ENCODE measurements at regions of chr2 and their contacts with region 1.

Region 1: DNA sequence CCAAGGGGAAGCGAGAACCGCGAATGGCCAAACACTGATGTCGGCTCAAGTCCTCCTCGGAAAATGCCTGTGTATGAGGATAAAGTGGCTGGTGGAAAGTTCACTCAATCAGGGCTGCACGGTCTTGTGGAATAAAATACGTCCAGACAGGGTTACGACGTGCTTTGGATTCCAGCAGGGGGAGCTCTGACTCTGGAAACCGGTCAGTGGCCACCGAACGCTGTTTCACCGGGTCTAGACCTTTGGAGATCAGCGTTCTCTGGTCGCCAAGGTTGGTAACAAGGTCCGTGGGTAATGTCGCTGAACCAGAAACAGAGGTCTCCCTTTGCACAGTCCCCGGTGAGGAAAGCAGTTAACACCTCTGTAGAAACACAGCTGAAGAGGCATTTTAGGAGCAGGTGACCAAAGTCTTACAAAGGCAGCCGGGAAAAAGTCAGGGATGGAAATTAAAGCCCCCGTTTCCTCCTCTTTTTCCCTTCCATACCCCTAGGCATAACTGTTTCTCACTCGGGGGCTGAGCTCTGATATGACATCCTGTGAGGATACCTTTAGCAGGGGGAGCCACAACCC is 47.8 kb downstream of the CDCA7 start:
- DNase-seq: peak; percentile 40 to 74 (median 67)
- ATAC-seq: peak; percentile 87
- H3K4me3 ChIP-seq: no peak overlapping the region
- H3K4me3 Mint-ChIP-seq: peak overlapping the region in 1 of 10 donors; percentile 62
- H3K27ac ChIP-seq: no peak overlapping the region
- H3K27ac Mint-ChIP-seq: no peak overlapping the region
- H3K4me1 ChIP-seq: peaks cover 0 to 3% of the 10 kb centered on the region in 2 donors
- H3K4me1 Mint-ChIP-seq: peaks cover 0 to 12% (median 4%) of the 10 kb centered on the region in 7 donors
- H3K27me3 ChIP-seq: peaks cover 3 to 7% of the 10 kb centered on the region in 2 donors
- H3K27me3 Mint-ChIP-seq: peaks cover 55 to 73% (median 62%) of the 10 kb centered on the region in 5 donors

Region 2: DNA sequence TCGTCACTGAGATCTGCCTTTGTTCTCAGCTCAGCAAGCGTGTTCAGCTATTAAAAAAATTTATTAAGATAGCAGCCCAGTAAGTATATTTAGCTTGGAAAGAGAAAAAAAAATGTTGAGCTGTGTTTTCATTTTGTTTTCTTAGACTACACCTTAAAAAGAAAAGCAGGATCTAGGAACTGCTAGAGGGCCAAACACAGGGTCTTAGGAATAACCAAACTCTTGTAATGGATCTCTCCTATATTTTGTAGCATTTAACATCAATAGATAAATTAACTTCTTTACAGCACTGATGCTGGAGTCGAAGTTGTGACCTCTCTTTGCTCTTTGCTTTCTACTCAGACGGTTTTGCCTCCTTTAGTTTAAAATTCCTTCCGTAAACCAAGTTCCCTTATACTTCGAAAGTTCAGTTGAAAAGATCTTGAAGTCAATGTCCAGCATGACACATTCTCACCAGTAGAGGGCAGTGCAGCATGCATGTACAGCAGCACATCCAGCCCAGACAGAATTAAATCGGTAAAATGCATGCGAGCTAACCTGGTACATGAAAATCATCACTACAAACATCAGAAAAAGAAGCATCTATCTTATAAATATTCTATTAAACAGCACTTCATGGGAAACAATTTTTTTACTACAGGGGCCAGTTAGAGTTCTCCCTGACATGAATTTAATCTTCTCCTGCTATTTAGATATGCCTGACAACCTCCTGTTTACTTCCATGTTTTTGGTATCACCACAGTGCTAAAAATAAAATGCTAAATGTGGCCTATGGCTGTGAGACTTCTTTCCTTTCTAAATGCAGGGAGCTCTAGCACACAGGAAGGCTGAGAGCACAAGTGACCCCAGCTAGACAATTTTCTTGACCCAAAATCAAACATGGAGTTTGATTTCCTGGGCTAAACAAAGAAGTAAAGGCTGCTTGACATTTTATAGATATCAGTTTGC is 375.0 kb before region 1 on chr2:
- CTCF ChIA-PET with region 1: no interaction called
- POLR2A ChIA-PET with region 1: no interaction called
- intact Hi-C with region 1: loop called (anchors 1 to 5 kb)
- DNase-seq: peak; percentile 20 to 75 (median 63)
- ATAC-seq: peak; percentile 91
- H3K4me3 ChIP-seq: no peak overlapping the region
- H3K4me3 Mint-ChIP-seq: no peak overlapping the region
- H3K27ac ChIP-seq: no peak overlapping the region
- H3K27ac Mint-ChIP-seq: no peak overlapping the region
- H3K4me1 ChIP-seq: no peaks in the 10 kb centered on the region
- H3K4me1 Mint-ChIP-seq: peaks cover 0 to 7% (median 3%) of the 10 kb centered on the region in 7 donors
- H3K27me3 ChIP-seq: no peaks in the 10 kb centered on the region
- H3K27me3 Mint-ChIP-seq: peaks cover 6 to 15% (median 9%) of the 10 kb centered on the region in 5 donors

Region 3: GRCh38 chr2:173903601-173904394 is 501.3 kb after region 1 on chr2:
- CTCF ChIA-PET with region 1: no interaction called
- POLR2A ChIA-PET with region 1: no interaction called
- intact Hi-C with region 1: loop called in 1 of 2 experiments (anchors 10 kb)
- DNase-seq: no peak
- ATAC-seq: no peak
- H3K4me3 ChIP-seq: no peak overlapping the region
- H3K4me3 Mint-ChIP-seq: no peak overlapping the region
- H3K27ac ChIP-seq: no peak overlapping the region
- H3K27ac Mint-ChIP-seq: peak overlapping the region in 1 of 9 donors; percentile 70
- H3K4me1 ChIP-seq: no peaks in the 10 kb centered on the region
- H3K4me1 Mint-ChIP-seq: peaks cover 0 to 11% (median 3%) of the 10 kb centered on the region in 7 donors
- H3K27me3 ChIP-seq: no peaks in the 10 kb centered on the region
- H3K27me3 Mint-ChIP-seq: no peaks in the 10 kb centered on the region

Region 4: DNA sequence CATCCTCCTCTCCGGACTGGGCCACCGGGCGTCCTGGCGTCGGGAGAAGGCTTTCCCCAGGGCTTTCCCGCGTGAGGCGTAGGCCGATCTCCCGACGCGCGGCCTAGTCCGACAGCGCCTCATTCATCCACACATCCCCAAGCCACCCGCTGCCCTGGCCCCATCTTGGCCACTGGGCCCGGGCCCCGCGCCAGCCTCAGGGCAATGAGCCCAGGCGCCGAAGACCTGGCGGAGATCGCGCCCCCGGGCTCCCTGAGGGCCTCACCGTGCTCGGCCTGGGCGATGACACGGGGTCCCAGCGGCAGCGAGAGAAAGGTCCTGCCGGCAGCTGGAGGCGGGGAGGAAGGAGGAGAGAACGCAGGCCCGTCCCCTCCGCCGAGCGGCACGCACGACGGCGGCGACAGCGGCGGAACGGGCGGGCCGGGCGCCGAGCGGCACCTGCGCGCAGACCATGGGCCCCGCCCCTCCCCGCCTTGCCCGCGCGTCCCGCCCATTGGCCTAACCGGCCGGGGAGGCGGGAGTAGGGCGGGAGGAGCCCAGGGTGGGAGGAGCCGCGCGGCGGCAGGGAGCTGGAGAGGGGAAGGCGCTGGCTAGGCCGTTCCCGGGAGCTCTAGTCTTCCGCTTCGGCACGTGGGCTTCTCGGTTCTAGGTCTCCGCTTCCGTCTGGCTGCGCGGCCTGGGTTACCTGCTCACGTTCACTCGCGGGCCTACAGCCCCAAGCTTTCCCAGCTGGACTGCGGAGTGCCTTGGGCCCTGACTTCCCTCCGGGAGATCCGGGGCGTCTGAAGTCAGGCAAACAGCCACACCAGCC is 845.9 kb after region 1 on chr2 and contains the start of gene OLA1:
- CTCF ChIA-PET with region 1: no interaction called
- POLR2A ChIA-PET with region 1: no interaction called
- intact Hi-C with region 1: loop called in 1 of 2 experiments (anchors 5 kb)
- DNase-seq: peak; percentile 91 to 99 (median 95)
- ATAC-seq: peak; percentile 99
- H3K4me3 ChIP-seq: peak within 1 kb of the TSS; percentile 90
- H3K4me3 Mint-ChIP-seq: peak within 1 kb of the TSS; percentile 71 to 88 (median 86)
- H3K27ac ChIP-seq: peak within 1 kb of the TSS; percentile 82
- H3K27ac Mint-ChIP-seq: peak within 1 kb of the TSS; percentile 67 to 91 (median 79)
- H3K4me1 ChIP-seq: peaks cover 6 to 12% of the 10 kb centered on the region in 2 donors
- H3K4me1 Mint-ChIP-seq: peaks cover 18 to 32% (median 25%) of the 10 kb centered on the region in 7 donors
- H3K27me3 ChIP-seq: no peaks in the 10 kb centered on the region
- H3K27me3 Mint-ChIP-seq: peaks cover 0 to 5% (median 0%) of the 10 kb centered on the region in 5 donors
- total RNA-seq, gene OLA1: 34.4 to 84.7 (median 40.3) TPM

Region 5: DNA sequence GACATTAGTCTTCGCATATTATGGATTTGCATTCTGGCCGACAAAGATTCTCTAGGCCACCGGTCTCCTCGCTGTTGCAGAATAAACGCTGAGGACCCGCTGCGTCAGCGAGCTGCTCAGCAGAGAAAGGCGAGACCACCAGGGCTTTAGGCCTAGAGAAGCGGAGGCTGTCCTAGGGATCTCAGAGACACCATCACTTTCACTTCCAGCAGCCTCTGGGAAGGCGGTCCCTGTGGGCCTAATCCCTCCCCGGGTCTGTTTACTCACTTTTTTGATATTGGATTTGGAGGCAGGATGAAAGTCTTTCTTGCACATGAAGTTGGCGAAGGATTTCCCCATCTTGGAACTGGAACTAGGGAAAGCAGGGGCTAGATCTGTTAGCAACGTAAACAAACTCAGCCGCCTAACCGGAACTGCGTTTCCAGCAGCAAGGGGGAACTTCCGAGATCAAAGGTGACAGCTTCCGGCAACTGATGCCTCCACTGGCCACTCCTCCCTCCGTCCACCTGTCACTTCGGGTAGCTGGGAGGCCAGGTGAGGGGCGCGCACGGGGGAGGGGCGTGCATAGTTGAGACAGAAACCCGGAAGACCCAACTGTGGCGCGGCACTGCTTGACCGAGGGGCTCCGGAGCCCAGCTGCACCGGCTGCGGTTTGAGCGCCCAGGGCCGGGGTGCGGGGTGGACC is 992.9 kb after region 1 on chr2 and contains the start of gene SCRN3:
- CTCF ChIA-PET with region 1: no interaction called
- POLR2A ChIA-PET with region 1: no interaction called
- intact Hi-C with region 1: loop called in 1 of 2 experiments (anchors 1 kb)
- DNase-seq: peak; percentile 49 to 89 (median 80)
- ATAC-seq: peak; percentile 93
- H3K4me3 ChIP-seq: peak within 1 kb of the TSS; percentile 85
- H3K4me3 Mint-ChIP-seq: peak within 1 kb of the TSS; percentile 86 to 100 (median 98)
- H3K27ac ChIP-seq: peak within 1 kb of the TSS; percentile 93
- H3K27ac Mint-ChIP-seq: peak within 1 kb of the TSS; percentile 97 to 100 (median 99)
- H3K4me1 ChIP-seq: peaks cover 18 to 23% of the 10 kb centered on the region in 2 donors
- H3K4me1 Mint-ChIP-seq: peaks cover 27 to 80% (median 65%) of the 10 kb centered on the region in 7 donors
- H3K27me3 ChIP-seq: no peaks in the 10 kb centered on the region
- H3K27me3 Mint-ChIP-seq: no peaks in the 10 kb centered on the region
- total RNA-seq, gene SCRN3: 12.3 to 22.1 (median 16.4) TPM

Measured in naive thymus-derived CD4-positive, alpha-beta T cell (primary cell).